ENCODE measurements at regions of chr1 and their contacts with region 1.

Region 1: GRCh38 chr1:244970661-244971551 is 106.6 kb upstream of the HNRNPU start:
- DNase-seq: peak; percentile 93
- H3K4me3 Mint-ChIP-seq: peak overlapping the region; percentile 89
- H3K27ac Mint-ChIP-seq: peak overlapping the region; percentile 98
- H3K4me1 Mint-ChIP-seq: peaks cover 18% of the 10 kb centered on the region
- H3K27me3 Mint-ChIP-seq: no peaks in the 10 kb centered on the region

Region 2: GRCh38 chr1:243255791-243256512 is 1715.0 kb before region 1 on chr1 and contains the start of gene SDCCAG8:
- CTCF ChIA-PET with region 1: no interaction called
- POLR2A ChIA-PET with region 1: no interaction called
- intact Hi-C with region 1: loop called (anchors 2 kb)
- DNase-seq: peak; percentile 97
- H3K4me3 Mint-ChIP-seq: peak within 1 kb of the TSS; percentile 95
- H3K27ac Mint-ChIP-seq: peak within 1 kb of the TSS; percentile 100
- H3K4me1 Mint-ChIP-seq: peaks cover 40% of the 10 kb centered on the region
- H3K27me3 Mint-ChIP-seq: peaks cover 3% of the 10 kb centered on the region
- total RNA-seq, gene SDCCAG8: 20.7 to 23.2 TPM

Region 3: GRCh38 chr1:244461245-244462071 is 509.4 kb before region 1 on chr1 and contains the start of gene CATSPERE:
- CTCF ChIA-PET with region 1: no interaction called
- POLR2A ChIA-PET with region 1: no interaction called
- intact Hi-C with region 1: loop called (anchors 1 kb)
- DNase-seq: peak; percentile 82
- H3K4me3 Mint-ChIP-seq: peak within 1 kb of the TSS; percentile 68
- H3K27ac Mint-ChIP-seq: peak within 1 kb of the TSS; percentile 71
- H3K4me1 Mint-ChIP-seq: peaks cover 12% of the 10 kb centered on the region
- H3K27me3 Mint-ChIP-seq: no peaks in the 10 kb centered on the region
- total RNA-seq, gene CATSPERE: 0.33 to 0.34 TPM

Region 4: GRCh38 chr1:244652699-244653466 is 318.0 kb before region 1 on chr1 and contains the start of gene DESI2:
- CTCF ChIA-PET with region 1: no interaction called
- POLR2A ChIA-PET with region 1: interaction called, 3 read pairs
- intact Hi-C with region 1: loop called (anchors 1 kb)
- DNase-seq: peak; percentile 98
- H3K4me3 Mint-ChIP-seq: peak within 1 kb of the TSS; percentile 79
- H3K27ac Mint-ChIP-seq: peak within 1 kb of the TSS; percentile 79
- H3K4me1 Mint-ChIP-seq: peaks cover 22% of the 10 kb centered on the region
- H3K27me3 Mint-ChIP-seq: no peaks in the 10 kb centered on the region
- total RNA-seq, gene DESI2: 24.8 to 25.6 TPM

Region 5: GRCh38 chr1:244665771-244666217 is 305.1 kb before region 1 on chr1:
- CTCF ChIA-PET with region 1: no interaction called
- POLR2A ChIA-PET with region 1: no interaction called
- intact Hi-C with region 1: no loop called
- DNase-seq: no peak
- H3K4me3 Mint-ChIP-seq: no peak overlapping the region
- H3K27ac Mint-ChIP-seq: no peak overlapping the region
- H3K4me1 Mint-ChIP-seq: peaks cover 9% of the 10 kb centered on the region
- H3K27me3 Mint-ChIP-seq: no peaks in the 10 kb centered on the region

Region 6: GRCh38 chr1:244864253-244865027 is 106.5 kb before region 1 on chr1 and contains the start of gene HNRNPU:
- CTCF ChIA-PET with region 1: interaction called, 9 read pairs
- POLR2A ChIA-PET with region 1: interaction called, 47 read pairs
- intact Hi-C with region 1: loop called (anchors 1 kb)
- DNase-seq: peak; percentile 97
- H3K4me3 Mint-ChIP-seq: peak within 1 kb of the TSS; percentile 99
- H3K27ac Mint-ChIP-seq: peak within 1 kb of the TSS; percentile 97
- H3K4me1 Mint-ChIP-seq: peaks cover 38% of the 10 kb centered on the region
- H3K27me3 Mint-ChIP-seq: no peaks in the 10 kb centered on the region
- total RNA-seq, gene HNRNPU: 410 to 421 TPM

Region 7: DNA sequence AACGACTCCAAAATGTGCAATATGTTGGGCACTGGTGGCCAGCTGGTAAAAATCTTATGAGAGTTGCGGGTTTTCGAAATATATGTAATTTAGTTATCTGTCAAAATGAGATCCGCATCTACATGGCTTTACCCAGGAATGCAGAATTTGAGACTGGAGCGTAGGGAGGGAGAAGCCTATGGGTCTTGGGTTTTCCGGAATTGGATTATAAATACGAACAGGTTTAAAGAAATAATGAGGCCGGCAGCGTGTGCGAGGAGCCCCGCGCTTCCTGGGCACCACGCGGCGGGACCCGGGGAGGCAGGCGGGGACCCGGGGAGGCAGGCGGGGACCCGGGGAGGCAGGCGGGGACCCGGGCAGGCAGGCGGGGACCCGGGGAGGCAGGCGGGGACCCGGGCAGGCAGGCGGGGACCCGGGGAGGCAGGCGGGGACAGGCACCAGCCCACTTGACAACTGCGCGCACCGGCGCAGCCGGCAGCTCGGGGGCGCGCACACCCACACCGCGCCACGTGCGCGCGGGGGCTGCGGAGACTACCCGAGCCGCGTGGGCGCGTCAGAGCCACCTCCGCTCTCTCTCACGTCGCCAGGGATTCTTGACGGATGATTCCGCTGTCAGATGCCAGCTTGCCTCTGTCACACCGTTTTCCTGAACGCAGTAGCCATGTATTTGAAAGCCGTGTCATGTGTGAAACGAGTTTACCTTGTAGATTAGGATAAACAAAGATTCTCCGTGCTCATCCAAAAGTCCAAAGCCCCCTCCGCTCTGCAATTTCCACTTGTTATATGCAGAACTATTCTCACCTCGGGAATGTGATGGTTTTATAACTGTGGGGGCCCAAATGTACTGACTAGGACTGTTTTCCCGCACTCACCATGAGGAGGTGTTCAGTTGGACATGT is 52.2 kb before region 1 on chr1:
- CTCF ChIA-PET with region 1: no interaction called
- POLR2A ChIA-PET with region 1: no interaction called
- intact Hi-C with region 1: loop called (anchors 1 kb)
- DNase-seq: peak; percentile 62
- H3K4me3 Mint-ChIP-seq: peak overlapping the region; percentile 73
- H3K27ac Mint-ChIP-seq: no peak overlapping the region
- H3K4me1 Mint-ChIP-seq: peaks cover 12% of the 10 kb centered on the region
- H3K27me3 Mint-ChIP-seq: no peaks in the 10 kb centered on the region

Region 8: GRCh38 chr1:244957525-244957924 is 13.4 kb before region 1 on chr1:
- CTCF ChIA-PET with region 1: no interaction called
- POLR2A ChIA-PET with region 1: no interaction called
- intact Hi-C with region 1: no loop called
- DNase-seq: no peak
- H3K4me3 Mint-ChIP-seq: no peak overlapping the region
- H3K27ac Mint-ChIP-seq: no peak overlapping the region
- H3K4me1 Mint-ChIP-seq: no peaks in the 10 kb centered on the region
- H3K27me3 Mint-ChIP-seq: no peaks in the 10 kb centered on the region

Region 9: GRCh38 chr1:245158913-245159312 is 188.0 kb after region 1 on chr1:
- CTCF ChIA-PET with region 1: no interaction called
- POLR2A ChIA-PET with region 1: no interaction called
- intact Hi-C with region 1: no loop called
- DNase-seq: no peak
- H3K4me3 Mint-ChIP-seq: no peak overlapping the region
- H3K27ac Mint-ChIP-seq: no peak overlapping the region
- H3K4me1 Mint-ChIP-seq: peaks cover 13% of the 10 kb centered on the region
- H3K27me3 Mint-ChIP-seq: peaks cover 35% of the 10 kb centered on the region

Measured in activated CD4-positive, alpha-beta memory T cell treated with anti-CD3 and anti-CD28 coated beads for 36 hours (primary cell).